GM12878 (cell line): ENCODE measurements at regions of chr20 and their contacts with region 1.

Region 1: GRCh38 chr20:17169585-17170136 is 57.2 kb upstream of the PCSK2 start:
- DNase-seq: no peak
- ATAC-seq: no peak
- H3K4me3 ChIP-seq: no peak overlapping the region
- H3K27ac ChIP-seq: no peak overlapping the region
- H3K4me1 ChIP-seq: no peaks in the 10 kb centered on the region
- H3K27me3 ChIP-seq: no peaks in the 10 kb centered on the region
- CTCF ChIP-seq: no peak
- EP300 ChIP-seq: no peak
- POLR2A ChIP-seq: no peak
- RAD21 ChIP-seq: no peak

Region 2: DNA sequence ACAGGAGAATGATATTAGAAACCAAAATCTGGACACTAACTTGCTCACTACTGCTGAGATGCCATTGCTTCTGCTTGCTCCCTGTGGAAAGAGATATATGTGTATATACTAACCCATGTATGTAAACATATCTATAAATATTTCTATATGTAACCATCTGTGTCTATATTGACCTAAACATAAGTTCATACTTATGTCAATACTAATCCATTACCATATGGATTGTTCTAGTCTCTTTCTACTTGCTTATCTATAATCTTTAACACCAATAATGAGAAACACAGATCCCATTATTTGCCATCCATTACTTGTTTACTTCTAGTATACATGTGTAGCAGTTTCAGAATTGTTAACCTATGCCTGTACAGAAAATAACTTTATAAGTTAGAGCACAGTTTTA is 56.3 kb before region 1 on chr20:
- CTCF ChIA-PET with region 1: no interaction called
- POLR2A ChIA-PET with region 1: no interaction called
- RAD21 ChIA-PET with region 1: no interaction called
- SMC1A ChIA-PET with region 1: no interaction called
- in situ Hi-C with region 1: loop called (anchors 10 kb)
- intact Hi-C with region 1: no loop called
- DNase-seq: no peak
- ATAC-seq: no peak
- H3K4me3 ChIP-seq: no peak overlapping the region
- H3K27ac ChIP-seq: no peak overlapping the region
- H3K4me1 ChIP-seq: no peaks in the 10 kb centered on the region
- H3K27me3 ChIP-seq: no peaks in the 10 kb centered on the region
- CTCF ChIP-seq: no peak
- EP300 ChIP-seq: no peak
- POLR2A ChIP-seq: no peak
- RAD21 ChIP-seq: no peak

Region 3: DNA sequence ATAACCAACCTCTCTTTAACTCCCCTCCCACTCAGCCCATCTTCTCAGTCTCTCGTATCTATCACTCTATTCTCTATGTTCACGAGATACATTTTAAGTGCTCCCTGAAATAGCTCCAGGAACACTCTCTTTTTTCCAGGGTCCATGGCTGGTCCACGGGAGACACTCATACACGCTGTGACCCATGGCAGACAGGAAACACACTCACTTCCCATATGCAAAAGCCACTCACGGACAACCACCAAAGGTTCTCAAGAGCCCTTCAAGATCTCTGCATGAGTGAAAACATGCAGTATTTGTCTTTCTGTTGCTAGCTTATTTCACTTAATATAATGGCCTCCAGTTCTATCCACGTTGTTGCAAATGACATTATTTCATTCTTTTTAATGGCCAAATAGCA is 14.3 kb before region 1 on chr20:
- CTCF ChIA-PET with region 1: no interaction called
- POLR2A ChIA-PET with region 1: no interaction called
- RAD21 ChIA-PET with region 1: no interaction called
- SMC1A ChIA-PET with region 1: no interaction called
- in situ Hi-C with region 1: no loop called
- intact Hi-C with region 1: no loop called
- DNase-seq: no peak
- ATAC-seq: no peak
- H3K4me3 ChIP-seq: no peak overlapping the region
- H3K27ac ChIP-seq: no peak overlapping the region
- H3K4me1 ChIP-seq: no peaks in the 10 kb centered on the region
- H3K27me3 ChIP-seq: no peaks in the 10 kb centered on the region
- CTCF ChIP-seq: no peak
- EP300 ChIP-seq: no peak
- POLR2A ChIP-seq: no peak
- RAD21 ChIP-seq: no peak